ENCODE measurements at regions of chr13 and their contacts with region 1.

Region 1: DNA sequence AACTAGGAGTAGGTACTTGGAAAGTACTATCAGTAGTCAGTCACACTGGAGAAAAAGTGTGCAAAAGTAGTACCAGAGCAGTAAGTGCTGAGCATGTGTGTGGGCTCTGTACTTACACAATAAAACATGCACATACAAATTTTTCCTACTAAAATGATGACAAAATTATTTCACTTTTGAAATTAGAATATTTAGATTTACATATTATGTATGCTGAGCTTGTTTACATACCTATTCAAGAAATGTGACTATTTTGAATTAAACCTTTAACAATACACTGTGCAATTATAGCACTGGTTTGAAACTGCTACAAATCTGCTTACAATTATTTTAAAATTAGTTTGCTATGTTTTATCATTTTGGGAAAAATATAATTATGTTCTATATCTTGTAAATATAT is 2781.6 kb upstream of the PCDH20 start:
- DNase-seq: no peak
- H3K4me3 ChIP-seq: no peak overlapping the region
- H3K4me3 Mint-ChIP-seq: no peak overlapping the region
- H3K27ac Mint-ChIP-seq: no peak overlapping the region
- H3K4me1 ChIP-seq: no peaks in the 10 kb centered on the region
- H3K4me1 Mint-ChIP-seq: no peaks in the 10 kb centered on the region
- H3K27me3 ChIP-seq: no peaks in the 10 kb centered on the region
- H3K27me3 Mint-ChIP-seq: no peaks in the 10 kb centered on the region
- CTCF ChIP-seq: no peak

Region 2: DNA sequence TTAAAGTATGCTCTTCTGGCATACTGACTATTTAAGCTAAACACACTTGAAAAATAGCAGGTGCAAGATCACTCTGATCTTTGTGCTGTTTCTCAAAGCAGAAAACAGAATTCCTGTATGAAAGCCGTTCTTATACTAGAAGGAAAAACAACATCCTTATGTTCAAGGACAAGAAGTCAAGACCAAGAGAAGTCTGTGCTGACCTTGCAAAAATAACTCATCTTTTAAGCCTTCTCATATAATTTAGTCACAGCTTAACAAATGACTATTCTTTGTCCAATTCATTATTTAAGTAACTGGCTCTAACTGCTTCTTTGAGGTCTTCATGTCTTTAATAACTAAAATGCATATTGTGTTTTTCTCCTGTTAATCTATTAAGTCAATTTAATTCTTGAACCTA is 31.4 kb before region 1 on chr13:
- CTCF ChIA-PET with region 1: no interaction called
- POLR2A ChIA-PET with region 1: no interaction called
- intact Hi-C with region 1: loop called (anchors 1 kb)
- DNase-seq: no peak
- H3K4me3 ChIP-seq: no peak overlapping the region
- H3K4me3 Mint-ChIP-seq: no peak overlapping the region
- H3K27ac Mint-ChIP-seq: no peak overlapping the region
- H3K4me1 ChIP-seq: no peaks in the 10 kb centered on the region
- H3K4me1 Mint-ChIP-seq: no peaks in the 10 kb centered on the region
- H3K27me3 ChIP-seq: no peaks in the 10 kb centered on the region
- H3K27me3 Mint-ChIP-seq: no peaks in the 10 kb centered on the region
- CTCF ChIP-seq: no peak

Measured in Caco-2 (cell line).